ENCODE measurements at regions of chr3 and their contacts with region 1.

Region 1: GRCh38 chr3:66816090-66816761 is 181.9 kb upstream of the KBTBD8 start:
- DNase-seq: no peak
- H3K4me3 Mint-ChIP-seq: no peak overlapping the region
- H3K27ac Mint-ChIP-seq: no peak overlapping the region
- H3K4me1 Mint-ChIP-seq: no peaks in the 10 kb centered on the region
- H3K27me3 Mint-ChIP-seq: peaks cover 8% of the 10 kb centered on the region
- CTCF ChIP-seq: peak; percentile 23

Region 2: GRCh38 chr3:65999606-66000005 is 816.6 kb before region 1 on chr3:
- CTCF ChIA-PET with region 1: no interaction called
- intact Hi-C with region 1: no loop called
- DNase-seq: peak; percentile 19
- H3K4me3 Mint-ChIP-seq: peak overlapping the region; percentile 58
- H3K27ac Mint-ChIP-seq: peak overlapping the region; percentile 80
- H3K4me1 Mint-ChIP-seq: peaks cover 80% of the 10 kb centered on the region
- H3K27me3 Mint-ChIP-seq: no peaks in the 10 kb centered on the region
- CTCF ChIP-seq: no peak

Region 3: GRCh38 chr3:66407611-66408218 is 408.5 kb before region 1 on chr3:
- CTCF ChIA-PET with region 1: no interaction called
- intact Hi-C with region 1: loop called (anchors 1 kb)
- DNase-seq: peak; percentile 81
- H3K4me3 Mint-ChIP-seq: no peak overlapping the region
- H3K27ac Mint-ChIP-seq: no peak overlapping the region
- H3K4me1 Mint-ChIP-seq: no peaks in the 10 kb centered on the region
- H3K27me3 Mint-ChIP-seq: no peaks in the 10 kb centered on the region
- CTCF ChIP-seq: peak; percentile 83

Region 4: DNA sequence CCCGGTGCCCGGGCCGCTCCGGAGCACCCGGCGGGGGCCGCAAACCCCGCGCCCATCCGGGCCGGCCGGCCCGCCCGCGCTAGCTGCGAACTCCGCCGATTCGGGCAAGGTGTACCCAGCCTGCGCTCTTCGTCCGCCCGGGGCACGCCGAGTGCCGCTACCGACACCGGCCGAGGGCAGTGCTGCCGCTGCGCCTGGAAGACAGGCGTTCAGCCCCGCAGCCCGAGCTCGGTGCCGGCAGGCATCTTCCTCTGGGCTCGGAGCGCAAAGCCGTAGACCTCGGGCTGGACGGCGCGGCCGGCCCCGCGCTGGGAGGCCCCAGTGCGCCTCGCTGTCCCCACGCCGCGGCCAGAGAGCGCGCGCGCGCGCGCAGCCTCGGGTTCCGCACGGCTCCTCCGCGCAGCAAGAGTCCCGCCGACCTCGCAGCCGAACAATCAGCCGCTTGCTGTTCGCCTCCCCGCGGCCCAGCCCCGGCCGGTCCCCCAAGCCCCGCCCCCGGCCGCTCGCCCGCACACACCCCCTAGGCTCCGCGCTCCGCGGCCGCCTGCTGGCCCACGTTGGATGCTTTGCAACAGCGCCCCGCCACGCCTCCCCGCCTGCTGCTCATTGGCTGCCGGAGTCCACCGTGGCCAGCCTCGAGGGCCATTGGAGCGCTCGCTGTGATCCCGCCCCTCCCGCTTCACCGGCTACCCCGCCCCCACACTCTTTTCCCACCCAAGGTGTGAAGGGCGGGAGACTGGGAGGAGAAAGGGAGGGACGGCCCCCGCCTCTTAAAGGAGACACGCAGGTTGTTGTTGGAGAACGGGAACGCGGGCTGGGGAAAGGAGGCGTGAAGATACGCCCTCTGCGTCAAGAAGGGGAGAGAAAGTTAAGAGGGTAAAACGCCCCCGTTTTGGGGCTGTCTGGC is 315.4 kb before region 1 on chr3 and contains the start of gene LRIG1:
- CTCF ChIA-PET with region 1: no interaction called
- intact Hi-C with region 1: loop called (anchors 5 kb)
- DNase-seq: peak; percentile 99
- H3K4me3 Mint-ChIP-seq: peak within 1 kb of the TSS; percentile 98
- H3K27ac Mint-ChIP-seq: peak within 1 kb of the TSS; percentile 74
- H3K4me1 Mint-ChIP-seq: peaks cover 32% of the 10 kb centered on the region
- H3K27me3 Mint-ChIP-seq: no peaks in the 10 kb centered on the region
- CTCF ChIP-seq: no peak
- total RNA-seq, gene LRIG1: 10.0 and 14.7 TPM in 2 replicates

Region 5: GRCh38 chr3:66830301-66830700 is 14.1 kb after region 1 on chr3:
- CTCF ChIA-PET with region 1: no interaction called
- intact Hi-C with region 1: no loop called
- DNase-seq: no peak
- H3K4me3 Mint-ChIP-seq: no peak overlapping the region
- H3K27ac Mint-ChIP-seq: no peak overlapping the region
- H3K4me1 Mint-ChIP-seq: no peaks in the 10 kb centered on the region
- H3K27me3 Mint-ChIP-seq: peaks cover 17% of the 10 kb centered on the region
- CTCF ChIP-seq: no peak

Measured in Calu3 (cell line).